ENCODE measurements at regions of chr1 and their contacts with region 1.

Region 1: DNA sequence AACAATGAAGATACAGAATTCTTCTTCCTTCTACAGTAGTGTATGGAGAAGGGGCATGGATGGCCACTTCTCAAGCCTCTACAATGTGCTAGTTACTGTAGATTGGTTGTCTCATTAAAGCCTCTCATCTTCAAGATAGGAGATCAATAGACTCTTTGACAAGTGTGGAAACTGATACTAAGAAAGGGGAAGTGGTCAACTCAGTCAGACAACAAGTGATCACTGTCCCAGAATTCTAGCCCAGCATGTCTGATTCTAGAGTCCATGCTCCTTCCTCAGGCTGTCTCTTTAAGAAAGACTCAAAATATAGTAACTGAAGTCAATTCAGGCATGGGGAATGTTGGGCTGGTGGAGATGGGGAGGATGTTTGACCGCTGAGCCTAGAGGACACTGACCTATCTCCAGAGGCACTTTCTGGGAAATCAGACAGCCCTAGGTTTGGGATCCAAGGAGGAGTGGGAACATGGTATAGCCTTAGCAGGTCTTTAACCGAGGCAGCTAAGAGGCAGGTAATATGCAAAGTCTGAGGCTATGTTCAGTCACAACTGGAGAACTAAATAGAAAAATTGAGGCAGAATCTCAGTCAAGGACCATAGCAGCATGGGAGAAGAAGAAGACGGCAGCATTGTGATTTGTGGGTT is 39.3 kb upstream of the EYA3 start:
- DNase-seq: peak; percentile 84
- ATAC-seq: peak; percentile 83
- H3K4me3 ChIP-seq: no peak overlapping the region
- H3K27ac ChIP-seq: no peak overlapping the region
- H3K4me1 ChIP-seq: peaks cover 43% of the 10 kb centered on the region
- H3K27me3 ChIP-seq: no peaks in the 10 kb centered on the region
- CTCF ChIP-seq: no peak
- EP300 ChIP-seq: peak in 1 of 2 experiments; percentile 57; a peak in 1 of 4 replicates
- POLR2A ChIP-seq: no peak
- RAD21 ChIP-seq: no peak

Region 2: DNA sequence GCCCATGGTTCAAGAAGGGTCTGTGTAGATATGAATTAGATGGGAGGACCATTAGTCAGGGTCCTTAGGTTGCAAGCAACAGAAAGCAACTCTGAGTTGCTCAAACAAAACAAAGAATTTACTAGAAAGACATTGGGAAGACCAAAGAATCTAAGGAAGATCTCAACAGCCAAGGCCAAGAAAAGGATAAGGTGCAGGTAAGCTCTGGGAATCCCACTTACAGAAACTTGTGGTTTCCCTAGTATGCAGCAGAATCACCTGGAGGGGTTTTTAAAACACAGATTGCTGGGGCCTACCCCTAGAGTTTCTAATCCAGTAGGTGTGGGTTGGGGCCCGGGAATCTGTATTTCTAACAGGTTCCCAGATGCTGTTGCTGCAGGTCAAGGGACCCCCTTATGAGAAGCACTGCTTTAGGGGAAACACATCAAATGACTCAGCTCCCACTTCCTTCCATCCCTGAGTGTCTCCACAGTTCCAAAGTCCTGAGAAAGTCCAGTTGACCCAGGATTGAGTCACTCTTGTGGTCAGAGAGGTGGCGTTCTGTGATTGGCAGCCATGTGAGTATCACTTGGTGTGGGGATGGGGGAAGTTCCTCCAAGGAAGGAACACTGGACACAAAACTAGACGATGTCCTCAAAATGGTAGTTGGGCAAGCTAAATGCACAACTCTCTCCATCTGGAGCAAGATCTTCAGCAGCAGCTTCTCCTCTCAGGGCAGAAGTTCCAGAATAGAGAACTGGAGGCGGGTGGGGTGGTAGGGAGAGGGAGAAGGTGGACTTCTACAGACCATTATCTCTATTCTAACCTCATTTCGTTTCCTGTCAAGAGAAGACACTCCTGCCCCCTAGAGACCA is 15.1 kb before region 1 on chr1:
- CTCF ChIA-PET with region 1: interaction called, 6 read pairs
- POLR2A ChIA-PET with region 1: interaction called, 6 read pairs
- RAD21 ChIA-PET with region 1: interaction called, 6 read pairs
- SMC1A ChIA-PET with region 1: interaction called, 28 read pairs
- in situ Hi-C with region 1: no loop called
- intact Hi-C with region 1: no loop called
- DNase-seq: no peak
- ATAC-seq: peak; percentile 43; the same call in 1 of the 3 replicates
- H3K4me3 ChIP-seq: no peak overlapping the region
- H3K27ac ChIP-seq: no peak overlapping the region
- H3K4me1 ChIP-seq: peaks cover 39% of the 10 kb centered on the region
- H3K27me3 ChIP-seq: no peaks in the 10 kb centered on the region
- CTCF ChIP-seq: peak in 1 of 3 experiments; percentile 48; a peak in 1 of 6 replicates
- EP300 ChIP-seq: no peak
- POLR2A ChIP-seq: no peak
- RAD21 ChIP-seq: peak; percentile 60

Region 3: GRCh38 chr1:28139025-28139712 is 11.4 kb after region 1 on chr1:
- CTCF ChIA-PET with region 1: interaction called, 10 read pairs
- POLR2A ChIA-PET with region 1: interaction called, 14 read pairs
- RAD21 ChIA-PET with region 1: interaction called, 6 read pairs
- SMC1A ChIA-PET with region 1: interaction called, 41 read pairs
- in situ Hi-C with region 1: no loop called
- intact Hi-C with region 1: no loop called
- DNase-seq: no peak
- ATAC-seq: peak; percentile 47
- H3K4me3 ChIP-seq: no peak overlapping the region
- H3K27ac ChIP-seq: no peak overlapping the region
- H3K4me1 ChIP-seq: peaks cover 44% of the 10 kb centered on the region
- H3K27me3 ChIP-seq: no peaks in the 10 kb centered on the region
- CTCF ChIP-seq: no peak
- EP300 ChIP-seq: no peak
- POLR2A ChIP-seq: no peak
- RAD21 ChIP-seq: no peak

Region 4: GRCh38 chr1:28144203-28145135 is 16.7 kb after region 1 on chr1:
- CTCF ChIA-PET with region 1: interaction called, 10 read pairs
- POLR2A ChIA-PET with region 1: interaction called, 14 read pairs
- RAD21 ChIA-PET with region 1: interaction called, 6 read pairs
- SMC1A ChIA-PET with region 1: interaction called, 41 read pairs
- in situ Hi-C with region 1: no loop called
- intact Hi-C with region 1: no loop called
- DNase-seq: peak; percentile 97
- ATAC-seq: peak; percentile 91
- H3K4me3 ChIP-seq: peak overlapping the region; percentile 17
- H3K27ac ChIP-seq: peak overlapping the region; percentile 62
- H3K4me1 ChIP-seq: peaks cover 51% of the 10 kb centered on the region
- H3K27me3 ChIP-seq: no peaks in the 10 kb centered on the region
- CTCF ChIP-seq: no peak
- EP300 ChIP-seq: peak; percentile 54 to 94; a peak in 3 of 4 replicates
- POLR2A ChIP-seq: no peak
- RAD21 ChIP-seq: no peak

Region 5: DNA sequence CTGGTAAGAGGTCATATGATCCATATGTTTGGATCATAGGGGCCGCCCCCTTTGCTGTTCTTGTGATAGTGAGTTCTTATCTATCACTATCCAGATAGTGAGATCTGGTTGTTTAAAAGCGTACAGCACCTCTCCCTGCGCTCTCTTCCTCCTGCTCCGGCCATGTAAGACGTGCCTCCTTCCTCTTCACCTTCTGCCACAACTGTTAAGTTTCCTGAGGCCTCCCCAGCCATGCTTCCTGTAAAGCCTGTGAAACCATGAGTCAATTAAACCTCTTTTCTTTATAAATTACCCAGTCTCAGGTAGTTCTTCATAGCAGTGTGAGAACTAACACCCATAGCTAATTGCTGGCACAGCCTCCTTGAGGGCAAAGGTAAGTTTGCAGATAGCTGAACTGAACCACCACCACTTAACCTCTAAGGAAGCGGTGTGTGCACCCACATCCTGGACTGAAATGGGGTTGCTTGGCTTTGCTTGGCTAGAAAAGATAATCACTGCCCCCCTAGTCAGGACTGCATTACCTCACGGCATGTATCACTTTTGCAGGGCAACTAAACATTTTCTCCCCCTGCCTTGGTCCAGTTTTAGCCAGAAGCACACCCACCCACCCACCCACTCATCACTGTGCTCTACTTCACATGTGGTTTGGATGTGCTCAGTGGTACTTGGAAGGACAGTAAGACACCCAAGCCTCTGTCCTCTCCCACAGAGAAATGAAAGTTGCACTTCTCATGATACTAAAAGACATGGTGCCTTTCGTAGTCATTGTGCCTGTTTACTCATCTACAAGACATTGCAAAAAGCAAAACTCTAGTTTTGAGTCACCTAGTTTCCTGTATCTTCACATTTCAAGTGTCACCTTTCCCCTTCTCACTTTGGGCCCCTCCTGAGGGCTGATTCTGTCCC is 71.8 kb after region 1 on chr1:
- CTCF ChIA-PET with region 1: interaction called, 4 read pairs
- POLR2A ChIA-PET with region 1: no interaction called
- RAD21 ChIA-PET with region 1: interaction called, 3 read pairs
- SMC1A ChIA-PET with region 1: no interaction called
- in situ Hi-C with region 1: no loop called
- intact Hi-C with region 1: loop called (anchors 1 kb)
- DNase-seq: peak; percentile 99
- ATAC-seq: peak; percentile 91
- H3K4me3 ChIP-seq: peak overlapping the region; percentile 57; the same call in 1 of the 2 replicates
- H3K27ac ChIP-seq: peak overlapping the region; percentile 83
- H3K4me1 ChIP-seq: peaks cover 44% of the 10 kb centered on the region
- H3K27me3 ChIP-seq: no peaks in the 10 kb centered on the region
- CTCF ChIP-seq: no peak
- EP300 ChIP-seq: peak; percentile 85 to 98
- POLR2A ChIP-seq: peak; percentile 58; the same call in 1 of the 2 replicates
- RAD21 ChIP-seq: peak; percentile 29; the same call in 1 of the 2 replicates